ENCODE measurements at regions of chr16 and their contacts with region 1.

Region 1: GRCh38 chr16:12907670-12908233 is 6.4 kb downstream of the SHISA9 start:
- DNase-seq: no peak
- H3K4me3 ChIP-seq: no peak overlapping the region
- H3K27ac ChIP-seq: no peak overlapping the region
- H3K4me1 ChIP-seq: peaks cover 2 to 6% (median 4%) of the 10 kb centered on the region in 4 experiments; a peak in 4 of 7 replicates
- H3K27me3 ChIP-seq: no peaks in the 10 kb centered on the region
- CTCF ChIP-seq: peak; percentile 23 to 75 (median 65)
- EP300 ChIP-seq: no peak
- POLR2A ChIP-seq: 0 out of 3 replicates have a peak, but pooled peaks of 1 of the 2 experiments have one; percentile 30
- RAD21 ChIP-seq: peak; percentile 51 to 69; a peak in 3 of 4 replicates

Region 2: DNA sequence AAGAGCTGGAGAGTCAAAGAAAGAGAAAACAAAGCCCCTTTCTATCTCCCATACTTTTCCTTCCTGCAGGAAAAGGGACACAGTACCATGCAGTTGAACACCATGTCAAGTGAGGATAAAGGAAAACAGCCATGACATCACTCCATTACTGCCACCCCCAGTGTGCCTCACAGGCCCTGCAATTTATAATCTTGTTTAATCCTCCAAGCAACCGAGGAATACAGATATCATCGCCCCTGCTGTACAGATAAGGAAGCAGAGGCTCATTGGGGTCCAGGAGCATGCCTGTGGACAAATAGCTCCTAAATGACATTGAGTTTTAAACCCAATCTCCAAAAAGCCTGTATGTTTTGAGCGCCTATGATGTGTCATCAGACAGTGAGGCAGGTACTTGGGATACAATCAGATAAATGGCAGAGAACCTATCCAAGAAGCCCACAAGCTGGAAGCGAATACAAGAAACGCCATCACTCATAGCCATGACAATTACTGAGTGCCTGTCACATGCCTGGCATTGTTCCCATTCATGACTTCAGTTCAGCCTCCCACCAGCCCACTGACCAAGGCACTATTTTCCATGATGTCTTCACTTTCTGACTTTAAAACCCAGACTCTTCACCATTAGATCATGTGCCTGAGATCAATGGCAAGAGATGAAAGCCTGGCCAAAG is 149.6 kb before region 1 on chr16:
- CTCF ChIA-PET with region 1: no interaction called
- POLR2A ChIA-PET with region 1: no interaction called
- DNase-seq: no peak
- H3K4me3 ChIP-seq: no peak overlapping the region
- H3K27ac ChIP-seq: no peak overlapping the region
- H3K4me1 ChIP-seq: peaks cover 0 to 5% (median 2%) of the 10 kb centered on the region in 4 experiments; a peak in 2 of 7 replicates
- H3K27me3 ChIP-seq: no peaks in the 10 kb centered on the region
- CTCF ChIP-seq: no peak
- EP300 ChIP-seq: no peak
- POLR2A ChIP-seq: no peak
- RAD21 ChIP-seq: no peak

Region 3: GRCh38 chr16:12881740-12882139 is 26.0 kb before region 1 on chr16:
- CTCF ChIA-PET with region 1: no interaction called
- POLR2A ChIA-PET with region 1: no interaction called
- DNase-seq: no peak
- H3K4me3 ChIP-seq: no peak overlapping the region
- H3K27ac ChIP-seq: no peak overlapping the region
- H3K4me1 ChIP-seq: no peaks in the 10 kb centered on the region
- H3K27me3 ChIP-seq: no peaks in the 10 kb centered on the region
- CTCF ChIP-seq: no peak
- EP300 ChIP-seq: no peak
- POLR2A ChIP-seq: no peak
- RAD21 ChIP-seq: no peak

Region 4: DNA sequence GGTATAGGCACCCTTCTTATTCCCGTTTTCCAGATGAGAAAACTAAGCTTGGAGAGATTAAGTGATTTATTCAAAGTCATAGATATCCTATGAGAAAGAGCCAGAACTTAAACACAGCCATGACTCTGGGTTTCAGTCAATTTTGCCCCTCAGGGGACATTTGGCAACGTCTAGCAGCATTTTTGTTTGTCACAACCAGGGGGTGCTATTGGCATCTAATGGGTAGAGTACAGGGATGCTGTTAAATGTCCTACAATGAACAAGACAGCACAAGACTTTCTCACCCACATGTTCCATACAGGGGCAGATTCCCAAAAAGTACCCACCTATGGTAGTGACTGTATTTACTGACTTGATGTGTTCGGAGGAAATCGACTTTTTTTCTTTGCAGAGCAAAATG is 11.2 kb before region 1 on chr16:
- CTCF ChIA-PET with region 1: interaction called, 15 read pairs
- POLR2A ChIA-PET with region 1: interaction called, 3 read pairs
- DNase-seq: no peak
- H3K4me3 ChIP-seq: no peak overlapping the region
- H3K27ac ChIP-seq: no peak overlapping the region
- H3K4me1 ChIP-seq: peaks cover 6 to 12% (median 8%) of the 10 kb centered on the region in 4 experiments
- H3K27me3 ChIP-seq: peaks cover 0 to 2% (median 0%) of the 10 kb centered on the region in 4 experiments; a peak in 3 of 7 replicates
- CTCF ChIP-seq: peak; percentile 5 to 80 (median 78)
- EP300 ChIP-seq: no peak
- POLR2A ChIP-seq: no peak
- RAD21 ChIP-seq: peak; percentile 86 to 93

Region 5: DNA sequence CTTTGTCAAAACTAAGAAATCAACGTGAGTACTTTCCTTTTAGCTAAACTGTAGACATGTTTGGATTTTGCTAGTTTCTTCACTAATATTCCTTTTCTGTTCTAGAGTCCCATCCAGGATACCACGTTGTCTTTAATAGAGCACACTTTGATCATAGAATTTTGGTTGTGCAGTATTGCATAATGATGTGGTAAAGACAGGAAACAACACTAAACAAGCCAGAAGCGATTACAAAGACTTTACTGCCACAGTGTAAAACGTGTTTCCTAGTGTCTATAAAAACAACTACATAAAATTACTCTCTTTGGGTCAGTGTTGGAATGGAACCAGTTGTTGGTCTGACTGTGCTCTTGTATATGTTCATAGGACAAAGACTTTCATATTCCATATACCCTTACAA is 13.0 kb after region 1 on chr16:
- CTCF ChIA-PET with region 1: interaction called, 20 read pairs
- POLR2A ChIA-PET with region 1: interaction called, 7 read pairs
- DNase-seq: no peak
- H3K4me3 ChIP-seq: no peak overlapping the region
- H3K27ac ChIP-seq: no peak overlapping the region
- H3K4me1 ChIP-seq: peaks cover 2 to 8% (median 6%) of the 10 kb centered on the region in 4 experiments; a peak in 3 of 7 replicates
- H3K27me3 ChIP-seq: no peaks in the 10 kb centered on the region
- CTCF ChIP-seq: no peak
- EP300 ChIP-seq: no peak
- POLR2A ChIP-seq: no peak
- RAD21 ChIP-seq: no peak

Measured in H1 (cell line).